Astrocyte of the cerebellum (primary cell): ENCODE measurements at regions of chr18 and their contacts with region 1.

Region 1: DNA sequence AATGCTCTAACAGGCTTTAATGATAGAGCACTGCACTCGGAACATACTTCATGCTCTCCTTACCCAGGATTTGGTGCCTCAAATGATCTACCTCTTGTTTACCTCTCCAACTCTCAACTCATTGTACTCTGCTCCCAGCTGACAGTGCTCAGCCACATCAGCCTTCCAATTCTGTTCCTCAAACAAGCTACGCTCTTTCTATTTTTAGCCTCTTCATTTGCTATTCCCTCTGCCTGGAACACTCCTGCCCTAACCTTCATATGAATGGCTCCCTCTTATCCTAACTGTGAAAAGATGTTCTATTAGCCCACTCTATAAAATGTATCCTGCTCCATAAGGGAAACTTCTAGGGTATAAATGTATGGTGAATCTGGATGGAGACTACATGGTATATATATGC is 42.5 kb downstream of the PIGN start:
- DNase-seq: no peak
- H3K4me3 ChIP-seq: no peak overlapping the region
- CTCF ChIP-seq: no peak

Region 2: DNA sequence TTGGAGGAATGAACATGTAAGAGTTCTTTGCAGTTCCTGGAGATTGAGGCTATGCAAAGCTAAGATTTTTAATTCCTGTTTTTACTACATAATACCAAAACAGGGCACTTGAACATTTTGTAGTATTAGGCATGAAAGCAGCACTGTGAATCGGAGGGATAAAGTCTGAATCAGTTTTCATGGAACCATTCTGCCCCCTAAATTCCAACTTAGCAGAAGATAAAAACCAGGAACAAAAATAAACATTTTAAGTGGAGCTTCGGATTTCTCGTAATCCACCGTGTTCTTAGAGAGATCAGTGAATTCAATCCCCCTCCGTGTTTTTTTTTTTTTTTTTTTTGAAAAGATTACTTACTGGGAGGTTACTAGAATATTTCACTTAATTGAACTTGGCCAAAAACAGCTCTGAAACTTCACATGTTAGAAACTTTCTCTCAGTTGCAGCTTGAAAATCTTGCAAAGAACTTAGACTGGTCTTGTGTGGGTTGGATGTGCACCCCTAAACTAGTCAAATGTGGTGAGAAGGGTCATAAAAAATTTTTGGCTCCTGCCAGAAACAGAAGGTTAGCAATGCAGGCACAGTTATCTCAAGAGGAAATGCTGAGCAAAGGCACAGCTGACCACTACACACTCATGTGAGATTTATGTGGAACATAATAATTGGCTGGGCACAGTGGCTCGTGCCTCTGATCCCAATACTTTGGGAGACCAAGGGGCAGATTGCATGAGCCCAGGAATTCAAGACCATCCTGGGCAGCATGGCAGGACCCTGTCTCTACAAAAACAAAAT is 106.2 kb before region 1 on chr18:
- in situ Hi-C with region 1: no loop called
- DNase-seq: no peak
- H3K4me3 ChIP-seq: no peak overlapping the region
- CTCF ChIP-seq: no peak

Region 3: DNA sequence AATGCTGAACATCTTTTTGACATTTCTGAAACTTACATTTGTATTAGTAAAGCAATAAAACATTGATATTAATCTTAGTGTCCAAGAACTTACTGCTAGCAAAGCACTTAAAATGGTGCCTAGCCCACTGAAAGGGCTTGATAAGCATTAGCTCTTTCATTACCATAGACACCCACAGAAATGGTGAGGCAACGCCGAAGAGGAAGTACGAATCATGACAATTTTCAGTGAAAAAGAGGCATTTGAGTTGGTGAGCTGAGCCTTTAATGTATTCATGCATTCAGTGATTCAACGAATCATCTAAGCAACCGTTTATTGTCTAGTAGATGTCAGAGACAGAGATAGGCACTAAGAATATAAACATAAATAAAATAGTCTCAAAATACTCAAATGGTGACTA is 58.6 kb before region 1 on chr18:
- in situ Hi-C with region 1: no loop called
- DNase-seq: no peak
- H3K4me3 ChIP-seq: no peak overlapping the region
- CTCF ChIP-seq: no peak

Region 4: DNA sequence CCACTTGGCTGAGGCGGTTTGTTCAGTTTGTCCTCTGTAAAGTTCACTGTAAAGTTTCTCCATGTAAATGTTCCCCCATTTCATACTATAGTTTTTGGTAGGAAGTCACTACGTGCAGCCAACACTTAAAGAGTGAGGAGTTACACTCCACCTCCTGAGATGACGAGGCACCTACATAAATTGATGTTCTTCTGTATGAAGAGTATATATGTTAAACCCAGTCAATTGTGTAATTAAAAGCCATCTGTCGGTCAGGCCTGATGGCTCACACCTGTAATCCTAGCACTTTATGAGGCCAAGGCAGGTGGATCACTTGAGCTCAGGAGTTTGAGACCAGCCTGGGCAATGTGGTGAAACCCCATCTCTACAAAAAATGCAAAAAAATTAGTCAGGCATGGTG is 34.9 kb after region 1 on chr18:
- in situ Hi-C with region 1: loop called (anchors 5 kb)
- DNase-seq: no peak
- H3K4me3 ChIP-seq: no peak overlapping the region
- CTCF ChIP-seq: no peak

Region 5: GRCh38 chr18:62214790-62215189 is 70.5 kb after region 1 on chr18:
- in situ Hi-C with region 1: no loop called
- DNase-seq: no peak
- H3K4me3 ChIP-seq: no peak overlapping the region
- CTCF ChIP-seq: no peak

Region 6: GRCh38 chr18:62437235-62438017 is 293.1 kb after region 1 on chr18:
- in situ Hi-C with region 1: no loop called
- DNase-seq: no peak
- H3K4me3 ChIP-seq: no peak overlapping the region
- CTCF ChIP-seq: no peak